Calu3 (cell line): ENCODE measurements at regions of chr7 and their contacts with region 1.

Region 1: GRCh38 chr7:14483663-14484062 is 418.9 kb downstream of the DGKB start:
- DNase-seq: no peak
- H3K4me3 Mint-ChIP-seq: no peak overlapping the region
- H3K27ac Mint-ChIP-seq: no peak overlapping the region
- H3K4me1 Mint-ChIP-seq: no peaks in the 10 kb centered on the region
- H3K27me3 Mint-ChIP-seq: no peaks in the 10 kb centered on the region
- CTCF ChIP-seq: no peak

Region 2: DNA sequence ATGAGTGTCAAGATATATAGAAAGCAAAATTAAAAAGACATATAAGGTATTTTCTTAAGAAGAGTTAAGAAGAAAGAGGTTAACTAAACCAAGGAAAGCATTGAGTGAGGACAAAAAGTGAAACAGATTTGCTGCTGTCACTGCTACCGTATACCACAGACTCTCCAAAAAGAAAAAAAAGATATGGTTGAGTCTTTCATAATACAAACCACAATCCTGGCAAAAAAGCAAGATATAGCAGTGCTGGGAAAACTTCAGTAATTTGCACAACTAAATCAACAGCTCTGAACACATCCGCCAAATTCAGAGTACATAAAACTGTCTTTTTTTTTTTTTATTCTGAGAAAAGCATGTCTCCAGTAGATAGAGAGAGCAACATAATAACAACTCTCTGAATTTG is 608.9 kb before region 1 on chr7:
- CTCF ChIA-PET with region 1: no interaction called
- intact Hi-C with region 1: no loop called
- DNase-seq: no peak
- H3K4me3 Mint-ChIP-seq: no peak overlapping the region
- H3K27ac Mint-ChIP-seq: no peak overlapping the region
- H3K4me1 Mint-ChIP-seq: peaks cover 3% of the 10 kb centered on the region
- H3K27me3 Mint-ChIP-seq: no peaks in the 10 kb centered on the region
- CTCF ChIP-seq: no peak

Region 3: DNA sequence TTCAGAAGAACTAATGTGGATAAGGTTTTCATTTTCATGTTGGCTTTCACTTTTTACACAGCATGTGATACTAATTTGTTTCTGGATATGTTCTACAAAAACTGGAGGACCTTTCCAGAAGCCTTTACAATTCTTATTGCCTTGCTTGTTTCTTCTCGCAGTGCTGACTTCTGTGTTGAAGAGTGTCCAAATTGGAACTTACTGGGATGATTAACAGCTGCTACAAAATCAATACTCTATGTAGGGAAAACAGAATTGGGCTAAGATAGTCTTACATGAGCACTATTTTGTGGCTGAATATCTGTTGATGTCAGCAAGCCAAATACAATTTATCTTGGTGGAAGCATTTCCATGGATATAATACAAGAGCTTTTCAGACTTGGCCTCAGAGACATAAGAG is 67.6 kb after region 1 on chr7:
- CTCF ChIA-PET with region 1: no interaction called
- intact Hi-C with region 1: loop called (anchors 2 kb)
- DNase-seq: no peak
- H3K4me3 Mint-ChIP-seq: no peak overlapping the region
- H3K27ac Mint-ChIP-seq: no peak overlapping the region
- H3K4me1 Mint-ChIP-seq: no peaks in the 10 kb centered on the region
- H3K27me3 Mint-ChIP-seq: no peaks in the 10 kb centered on the region
- CTCF ChIP-seq: no peak

Region 4: DNA sequence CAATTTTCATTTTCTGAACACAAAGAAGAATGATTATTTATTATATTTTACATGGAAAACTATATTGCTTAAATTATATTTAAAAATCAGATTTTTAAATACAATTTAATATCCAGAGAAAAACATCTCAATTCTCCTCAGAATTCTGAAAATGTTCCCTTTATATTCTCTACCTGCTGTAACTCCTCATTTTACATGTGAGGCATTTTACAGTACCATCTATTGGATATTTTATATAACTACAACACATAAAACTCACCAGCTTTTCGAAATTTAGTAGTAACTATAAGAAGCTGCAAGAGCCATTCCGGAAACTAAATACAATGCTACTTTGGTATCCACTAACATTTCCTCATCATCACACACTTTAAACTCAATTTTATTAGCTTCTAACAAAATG is 154.3 kb after region 1 on chr7:
- CTCF ChIA-PET with region 1: no interaction called
- intact Hi-C with region 1: loop called (anchors 2 kb)
- DNase-seq: no peak
- H3K4me3 Mint-ChIP-seq: no peak overlapping the region
- H3K27ac Mint-ChIP-seq: no peak overlapping the region
- H3K4me1 Mint-ChIP-seq: peaks cover 43% of the 10 kb centered on the region
- H3K27me3 Mint-ChIP-seq: no peaks in the 10 kb centered on the region
- CTCF ChIP-seq: peak; percentile 17